Sciatic nerve (tissue), 2 donors: ENCODE measurements at regions of chr4 and their contacts with region 1.

Region 1: GRCh38 chr4:41214136-41214824 is at the start of gene APBB2:
- DNase-seq: peak; percentile 96
- ATAC-seq: peak; percentile 95
- total RNA-seq, gene APBB2: 147 TPM

Region 2: GRCh38 chr4:40924793-40925117 is 289.5 kb before region 1 on chr4:
- intact Hi-C with region 1: loop called (anchors 5 kb)
- DNase-seq: no peak
- ATAC-seq: no peak

Region 3: GRCh38 chr4:40976343-40976742 is 237.9 kb before region 1 on chr4:
- intact Hi-C with region 1: loop called (anchors 2 kb)
- DNase-seq: no peak
- ATAC-seq: peak; percentile 66

Region 4: GRCh38 chr4:41060352-41061334 is 153.6 kb before region 1 on chr4:
- intact Hi-C with region 1: loop called (anchors 10 kb)
- DNase-seq: no peak
- ATAC-seq: peak; percentile 30